ENCODE measurements at regions of chrX and their contacts with region 1.

Region 1: DNA sequence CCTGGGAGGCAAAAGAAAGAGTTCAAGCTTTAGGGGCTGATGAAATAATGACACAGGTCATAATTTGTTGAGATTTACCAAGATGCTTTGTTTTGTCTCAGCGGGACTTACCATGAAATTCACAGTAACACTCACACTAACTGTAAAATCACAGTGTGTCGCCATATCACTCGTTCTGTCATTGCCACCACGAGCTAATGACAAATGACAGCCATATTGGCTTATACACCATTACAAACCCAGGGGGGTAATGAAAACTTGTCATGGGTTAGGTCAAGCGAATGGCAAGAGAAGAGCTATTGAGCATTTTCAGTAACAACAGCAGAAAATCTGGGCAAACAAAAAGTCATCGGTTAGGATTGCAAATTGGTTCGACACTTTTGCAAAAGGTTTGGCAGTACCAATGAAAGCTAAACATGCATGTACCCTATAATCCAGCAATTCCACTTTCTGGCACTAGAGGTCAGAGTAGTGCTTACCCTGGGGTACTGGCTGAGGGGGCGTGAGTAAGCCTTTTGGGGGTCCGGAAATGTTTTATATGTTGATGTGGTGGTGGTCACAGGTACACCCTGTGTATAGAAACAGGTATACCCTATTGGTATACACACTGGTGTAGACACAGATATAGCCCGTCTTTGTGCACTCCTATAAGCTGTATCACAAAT is 83.9 kb upstream of the RAI2 start:
- DNase-seq: peak; percentile 7
- ATAC-seq: no peak
- H3K4me3 ChIP-seq: no peak overlapping the region
- H3K27ac ChIP-seq: no peak overlapping the region
- H3K4me1 ChIP-seq: no peaks in the 10 kb centered on the region
- H3K27me3 ChIP-seq: no peaks in the 10 kb centered on the region
- CTCF ChIP-seq: peak; percentile 60
- EP300 ChIP-seq: no peak
- POLR2A ChIP-seq: no peak
- RAD21 ChIP-seq: no peak

Region 2: DNA sequence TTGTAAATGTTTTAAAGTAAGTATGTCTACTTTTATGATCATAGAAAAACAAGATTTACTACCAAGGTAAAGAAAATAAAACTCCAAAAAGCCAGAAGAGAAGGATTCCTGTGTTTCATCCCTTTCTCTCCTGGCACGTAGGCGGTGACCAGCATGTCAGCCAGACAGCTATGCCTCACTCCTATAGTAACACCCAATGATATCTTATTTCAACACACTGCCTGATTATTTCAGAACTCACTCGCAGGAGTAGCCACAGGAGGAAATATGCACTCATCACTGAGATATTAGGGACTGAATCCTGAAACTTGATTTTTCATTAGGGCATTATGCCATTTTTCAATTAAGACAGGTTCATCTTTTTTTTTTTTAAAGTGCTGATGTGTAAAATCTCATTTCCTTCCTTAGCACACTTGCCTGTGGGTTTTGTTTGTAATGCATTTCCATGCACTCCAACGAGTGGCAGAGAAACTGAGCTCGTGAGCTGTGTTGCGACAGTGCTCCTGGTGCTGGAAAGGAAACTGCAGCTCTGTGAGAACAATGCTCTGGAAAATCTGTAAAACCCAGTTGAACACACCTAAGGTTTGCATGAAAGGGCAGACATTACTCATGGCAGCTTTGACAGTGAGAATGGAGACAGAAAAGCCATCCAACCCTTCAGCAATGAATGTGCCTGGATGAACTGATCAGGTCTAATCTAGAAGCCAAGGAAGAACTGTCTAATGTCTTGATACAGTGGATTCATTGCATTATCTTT is 102.0 kb before region 1 on chrX:
- CTCF ChIA-PET with region 1: no interaction called
- POLR2A ChIA-PET with region 1: no interaction called
- in situ Hi-C with region 1: no loop called
- intact Hi-C with region 1: no loop called
- DNase-seq: no peak
- ATAC-seq: no peak
- H3K4me3 ChIP-seq: no peak overlapping the region
- H3K27ac ChIP-seq: no peak overlapping the region
- H3K4me1 ChIP-seq: no peaks in the 10 kb centered on the region
- H3K27me3 ChIP-seq: 0 out of 5 replicates have a peak, but pooled peaks cover 0 to 3% of the 10 kb centered on the region in 2 experiments
- CTCF ChIP-seq: no peak
- EP300 ChIP-seq: no peak
- POLR2A ChIP-seq: no peak
- RAD21 ChIP-seq: no peak

Region 3: GRCh38 chrX:18065956-18066355 is 121.0 kb after region 1 on chrX:
- CTCF ChIA-PET with region 1: no interaction called
- POLR2A ChIA-PET with region 1: no interaction called
- in situ Hi-C with region 1: no loop called
- intact Hi-C with region 1: no loop called
- DNase-seq: no peak
- ATAC-seq: no peak
- H3K4me3 ChIP-seq: no peak overlapping the region
- H3K27ac ChIP-seq: no peak overlapping the region
- H3K4me1 ChIP-seq: no peaks in the 10 kb centered on the region
- H3K27me3 ChIP-seq: no peaks in the 10 kb centered on the region
- CTCF ChIP-seq: no peak
- EP300 ChIP-seq: no peak
- POLR2A ChIP-seq: no peak
- RAD21 ChIP-seq: no peak

Region 4: DNA sequence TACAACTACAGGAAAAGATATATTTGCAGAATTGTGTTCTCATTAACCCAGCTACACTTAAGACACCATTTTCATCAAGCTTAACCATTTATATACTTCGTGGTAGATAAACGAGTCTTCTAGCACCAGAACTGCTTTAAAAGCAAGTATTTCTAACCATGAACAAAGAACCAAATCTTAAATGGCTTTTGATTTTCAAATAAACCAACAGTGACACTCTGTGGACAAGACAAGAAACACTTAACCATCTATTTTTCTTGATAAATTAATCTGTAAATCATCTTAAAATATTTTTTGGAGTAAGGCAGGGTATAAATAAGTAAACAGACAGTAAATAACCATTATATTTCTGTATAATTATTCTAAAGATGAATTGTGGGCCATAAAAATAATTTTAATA is 265.5 kb after region 1 on chrX:
- CTCF ChIA-PET with region 1: no interaction called
- POLR2A ChIA-PET with region 1: no interaction called
- in situ Hi-C with region 1: loop called (anchors 25 kb)
- intact Hi-C with region 1: no loop called
- DNase-seq: no peak
- ATAC-seq: no peak
- H3K4me3 ChIP-seq: no peak overlapping the region
- H3K27ac ChIP-seq: no peak overlapping the region
- H3K4me1 ChIP-seq: no peaks in the 10 kb centered on the region
- H3K27me3 ChIP-seq: no peaks in the 10 kb centered on the region
- CTCF ChIP-seq: no peak
- EP300 ChIP-seq: no peak
- POLR2A ChIP-seq: no peak
- RAD21 ChIP-seq: no peak